HEK293 (cell line): ENCODE measurements at regions of chr2 and their contacts with region 1.

Region 1: DNA sequence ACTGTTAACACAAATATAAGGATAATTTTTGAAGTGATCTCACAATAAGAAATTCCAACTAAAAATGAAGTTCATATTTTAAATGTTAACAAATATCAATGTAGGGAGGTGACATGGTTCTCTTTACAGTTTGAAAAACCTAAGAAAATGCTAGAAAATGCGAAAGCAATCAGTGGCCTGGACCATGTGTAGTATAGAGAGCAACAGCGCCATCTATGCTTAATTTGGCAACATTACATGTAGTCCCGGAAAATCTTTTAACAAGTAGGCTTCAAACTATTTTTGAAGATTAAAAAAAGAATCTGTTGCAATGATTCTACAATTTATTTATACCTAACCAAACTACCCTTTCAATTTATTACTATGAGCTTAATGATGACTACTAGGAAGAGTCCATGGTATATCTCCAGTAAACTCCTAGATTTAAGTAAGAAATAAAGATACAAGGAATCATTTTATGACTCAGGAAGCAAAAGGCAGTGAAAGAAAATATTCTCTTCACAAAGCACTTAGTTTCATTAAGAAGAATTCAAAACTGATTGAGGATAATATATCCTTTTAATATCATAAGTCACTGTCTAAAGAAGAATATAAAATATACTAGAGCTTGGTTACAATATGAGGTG is 33.3 kb downstream of the NDUFA10 start:
- H3K4me3 ChIP-seq: no peak overlapping the region
- H3K27ac ChIP-seq: no peak overlapping the region
- H3K4me1 ChIP-seq: no peaks in the 10 kb centered on the region
- CTCF ChIP-seq: no peak

Region 2: DNA sequence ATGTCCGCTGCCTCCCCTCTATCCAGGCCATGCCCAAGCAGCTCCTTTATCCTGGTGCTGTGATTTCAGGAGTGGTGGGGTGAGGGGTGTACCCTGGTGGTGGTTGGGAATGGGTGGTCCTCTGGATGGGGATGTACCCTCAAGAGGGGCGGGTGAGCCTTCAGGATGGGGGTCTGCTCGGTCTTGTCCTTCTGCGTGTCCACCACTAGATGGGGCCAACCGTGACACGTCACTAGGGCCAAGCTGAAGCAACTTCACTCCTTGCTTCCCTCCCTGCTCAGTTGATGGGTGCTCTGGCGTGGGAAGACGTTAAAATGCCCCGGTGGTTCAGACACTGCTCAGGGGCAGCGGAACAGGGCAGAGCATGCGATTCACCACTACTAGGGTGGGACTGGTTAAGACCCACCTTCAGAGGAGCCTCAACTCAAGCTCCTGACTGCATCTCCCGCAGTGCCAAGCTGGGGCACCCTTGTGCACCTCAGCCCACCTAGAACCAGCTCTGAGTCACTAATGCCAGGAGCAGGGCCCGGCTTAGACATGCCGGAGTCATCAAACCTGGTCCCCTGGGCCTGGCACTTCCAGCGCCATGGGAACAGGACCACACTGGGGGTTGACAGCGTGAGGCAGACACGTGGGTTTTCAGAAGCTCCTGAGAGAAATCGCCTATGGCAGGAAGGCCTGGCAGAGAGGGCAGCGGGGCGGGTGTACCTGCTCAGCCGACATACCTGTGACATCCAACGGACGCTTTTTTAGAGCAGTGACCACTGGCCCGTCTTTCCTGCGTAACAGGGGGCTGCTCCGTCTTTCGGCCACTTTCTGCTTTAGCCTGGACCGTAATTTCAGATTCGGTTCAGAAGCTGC is 847.7 kb before region 1 on chr2:
- CTCF ChIA-PET with region 1: interaction called, 12 read pairs
- POLR2A ChIA-PET with region 1: no interaction called
- H3K4me3 ChIP-seq: no peak overlapping the region
- H3K27ac ChIP-seq: no peak overlapping the region
- H3K4me1 ChIP-seq: no peaks in the 10 kb centered on the region
- CTCF ChIP-seq: peak; percentile 55; the same call in 1 of the 2 replicates

Region 3: GRCh38 chr2:239824046-239824694 is 167.6 kb before region 1 on chr2:
- CTCF ChIA-PET with region 1: interaction called, 23 read pairs
- POLR2A ChIA-PET with region 1: no interaction called
- H3K4me3 ChIP-seq: no peak overlapping the region
- H3K27ac ChIP-seq: no peak overlapping the region
- H3K4me1 ChIP-seq: peaks cover 8% of the 10 kb centered on the region
- CTCF ChIP-seq: no peak

Region 4: GRCh38 chr2:239979243-239980023 is 12.4 kb before region 1 on chr2:
- CTCF ChIA-PET with region 1: interaction called, 17 read pairs
- POLR2A ChIA-PET with region 1: no interaction called
- H3K4me3 ChIP-seq: no peak overlapping the region
- H3K27ac ChIP-seq: no peak overlapping the region
- H3K4me1 ChIP-seq: no peaks in the 10 kb centered on the region
- CTCF ChIP-seq: no peak

Region 5: DNA sequence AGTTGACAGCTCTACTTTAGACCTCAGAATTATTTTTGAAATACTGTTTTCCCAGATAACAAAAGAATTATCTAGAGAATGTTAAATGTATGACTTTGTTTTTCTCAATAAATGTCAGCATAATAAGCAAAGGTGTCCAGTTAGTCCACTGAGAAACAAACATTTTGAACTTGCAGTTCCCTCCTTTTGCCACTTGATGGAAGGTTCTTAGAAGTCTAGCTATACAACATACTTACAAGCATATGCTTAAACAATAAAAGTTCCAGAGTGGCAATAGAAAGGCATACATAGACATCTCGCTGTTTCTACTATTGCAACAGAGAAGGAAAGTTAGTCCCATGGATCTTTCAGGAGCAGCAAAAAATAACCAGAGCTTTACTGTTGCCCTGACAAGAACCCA is 21.5 kb after region 1 on chr2:
- CTCF ChIA-PET with region 1: interaction called, 10 read pairs
- POLR2A ChIA-PET with region 1: no interaction called
- H3K4me3 ChIP-seq: no peak overlapping the region
- H3K27ac ChIP-seq: no peak overlapping the region
- H3K4me1 ChIP-seq: no peaks in the 10 kb centered on the region
- CTCF ChIP-seq: no peak